ENCODE measurements at regions of chr6 and their contacts with region 1.

Region 1: GRCh38 chr6:2634139-2634964 is 116.4 kb downstream of the MYLK4 start:
- DNase-seq: peak; percentile 62 to 80 (median 72)
- H3K4me3 ChIP-seq: peak overlapping the region; percentile 26
- H3K4me3 Mint-ChIP-seq: peak overlapping the region; percentile 57 to 74 (median 66)
- H3K27ac ChIP-seq: no peak overlapping the region
- H3K27ac Mint-ChIP-seq: no peak overlapping the region
- H3K4me1 ChIP-seq: peaks cover 11% of the 10 kb centered on the region
- H3K4me1 Mint-ChIP-seq: peaks cover 0 to 9% (median 4%) of the 10 kb centered on the region in 3 donors
- H3K27me3 ChIP-seq: no peaks in the 10 kb centered on the region
- H3K27me3 Mint-ChIP-seq: peaks cover 12 to 32% of the 10 kb centered on the region in 2 donors

Region 2: GRCh38 chr6:1596088-1596852 is 1038.1 kb before region 1 on chr6:
- CTCF ChIA-PET with region 1: interaction called, 150 read pairs
- POLR2A ChIA-PET with region 1: no interaction called
- DNase-seq: peak; percentile 43 to 71 (median 59)
- H3K4me3 ChIP-seq: no peak overlapping the region
- H3K4me3 Mint-ChIP-seq: no peak overlapping the region
- H3K27ac ChIP-seq: no peak overlapping the region
- H3K27ac Mint-ChIP-seq: peak overlapping the region in 1 of 8 donors; percentile 7
- H3K4me1 ChIP-seq: peaks cover 7% of the 10 kb centered on the region
- H3K4me1 Mint-ChIP-seq: peaks cover 3 to 8% (median 7%) of the 10 kb centered on the region in 3 donors
- H3K27me3 ChIP-seq: peaks cover 47% of the 10 kb centered on the region
- H3K27me3 Mint-ChIP-seq: peaks cover 45 to 71% of the 10 kb centered on the region in 2 donors

Region 3: GRCh38 chr6:1604158-1605030 is 1030.0 kb before region 1 on chr6:
- CTCF ChIA-PET with region 1: interaction called, 150 read pairs
- POLR2A ChIA-PET with region 1: no interaction called
- DNase-seq: peak in 4 of 5 donors; percentile 45 to 68 (median 54)
- H3K4me3 ChIP-seq: no peak overlapping the region
- H3K4me3 Mint-ChIP-seq: no peak overlapping the region
- H3K27ac ChIP-seq: no peak overlapping the region
- H3K27ac Mint-ChIP-seq: no peak overlapping the region
- H3K4me1 ChIP-seq: peaks cover 34% of the 10 kb centered on the region
- H3K4me1 Mint-ChIP-seq: peaks cover 30 to 46% (median 31%) of the 10 kb centered on the region in 3 donors
- H3K27me3 ChIP-seq: peaks cover 74% of the 10 kb centered on the region
- H3K27me3 Mint-ChIP-seq: peaks cover 62 to 83% of the 10 kb centered on the region in 2 donors

Region 4: DNA sequence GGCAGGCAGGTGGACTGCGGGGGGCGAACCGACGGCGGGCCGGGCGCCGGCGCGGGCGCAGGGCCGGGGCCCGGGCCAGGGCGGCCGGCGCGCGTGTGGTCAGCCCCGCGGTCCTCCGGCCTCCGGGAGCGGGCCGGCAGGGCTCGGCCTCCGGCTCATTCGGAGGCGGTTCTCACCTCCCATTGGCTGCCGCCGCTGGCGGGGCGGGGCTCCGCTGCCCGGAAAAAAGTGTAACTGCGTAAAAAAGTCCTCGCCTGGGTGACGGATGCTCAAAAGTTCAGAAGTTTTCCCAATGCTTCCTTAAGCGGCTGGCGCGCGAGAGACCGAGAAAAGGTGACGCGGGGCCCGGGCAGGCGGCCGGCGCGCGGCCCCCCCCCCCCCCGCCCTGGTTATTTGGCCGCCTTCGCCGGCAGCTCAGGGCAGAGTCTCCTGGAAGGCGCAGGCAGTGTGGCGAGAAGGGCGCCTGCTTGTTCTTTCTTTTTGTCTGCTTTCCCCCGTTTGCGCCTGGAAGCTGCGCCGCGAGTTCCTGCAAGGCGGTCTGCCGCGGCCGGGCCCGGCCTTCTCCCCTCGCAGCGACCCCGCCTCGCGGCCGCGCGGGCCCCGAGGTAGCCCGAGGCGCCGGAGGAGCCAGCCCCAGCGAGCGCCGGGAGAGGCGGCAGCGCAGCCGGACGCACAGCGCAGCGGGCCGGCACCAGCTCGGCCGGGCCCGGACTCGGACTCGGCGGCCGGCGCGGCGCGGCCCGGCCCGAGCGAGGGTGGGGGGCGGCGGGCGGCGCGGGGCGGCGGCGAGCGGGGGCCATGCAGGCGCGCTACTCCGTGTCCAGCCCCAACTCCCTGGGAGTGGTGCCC is 1024.5 kb before region 1 on chr6 and contains the start of gene FOXC1:
- CTCF ChIA-PET with region 1: interaction called, 38 read pairs
- POLR2A ChIA-PET with region 1: no interaction called
- DNase-seq: no peak
- H3K4me3 ChIP-seq: no peak within 1 kb of the TSS
- H3K4me3 Mint-ChIP-seq: peak within 1 kb of the TSS; percentile 77 to 89 (median 82)
- H3K27ac ChIP-seq: no peak within 1 kb of the TSS
- H3K27ac Mint-ChIP-seq: peak within 1 kb of the TSS in 2 of 8 donors; percentile 40 to 74
- H3K4me1 ChIP-seq: peaks cover 38% of the 10 kb centered on the region
- H3K4me1 Mint-ChIP-seq: peaks cover 44 to 65% (median 55%) of the 10 kb centered on the region in 3 donors
- H3K27me3 ChIP-seq: peaks cover 58% of the 10 kb centered on the region
- H3K27me3 Mint-ChIP-seq: peaks cover 58 to 66% of the 10 kb centered on the region in 2 donors
- total RNA-seq, gene FOXC1: not detected

Region 5: GRCh38 chr6:2209226-2209809 is 425.0 kb before region 1 on chr6:
- CTCF ChIA-PET with region 1: interaction called, 11 read pairs
- POLR2A ChIA-PET with region 1: no interaction called
- DNase-seq: peak in 2 of 5 donors; percentile 8 to 52
- H3K4me3 ChIP-seq: no peak overlapping the region
- H3K4me3 Mint-ChIP-seq: no peak overlapping the region
- H3K27ac ChIP-seq: no peak overlapping the region
- H3K27ac Mint-ChIP-seq: peak overlapping the region in 2 of 8 donors; percentile 12 to 73
- H3K4me1 ChIP-seq: no peaks in the 10 kb centered on the region
- H3K4me1 Mint-ChIP-seq: peaks cover 1 to 6% (median 3%) of the 10 kb centered on the region in 3 donors
- H3K27me3 ChIP-seq: no peaks in the 10 kb centered on the region
- H3K27me3 Mint-ChIP-seq: no peaks in the 10 kb centered on the region

Region 6: DNA sequence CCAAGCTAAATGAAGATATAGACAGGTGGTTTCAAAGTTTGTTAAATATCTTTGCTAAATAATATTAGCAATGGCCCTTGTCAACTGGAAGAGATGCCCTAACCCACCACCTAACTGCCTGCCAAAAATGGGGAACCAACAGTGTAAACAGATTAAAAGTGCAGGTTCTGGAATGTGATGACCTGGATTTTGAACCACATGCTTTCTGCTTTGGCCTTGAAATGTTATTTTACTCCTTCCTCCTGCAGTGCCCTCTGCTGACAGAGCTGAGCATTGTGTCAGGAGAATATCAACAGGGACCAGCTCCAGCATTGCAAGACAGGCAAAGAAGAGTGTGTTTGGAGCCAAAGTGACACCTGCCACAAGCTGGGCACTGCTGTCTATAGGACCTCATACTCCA is 110.3 kb before region 1 on chr6:
- CTCF ChIA-PET with region 1: no interaction called
- POLR2A ChIA-PET with region 1: no interaction called
- DNase-seq: no peak
- H3K4me3 ChIP-seq: no peak overlapping the region
- H3K4me3 Mint-ChIP-seq: no peak overlapping the region
- H3K27ac ChIP-seq: no peak overlapping the region
- H3K27ac Mint-ChIP-seq: no peak overlapping the region
- H3K4me1 ChIP-seq: no peaks in the 10 kb centered on the region
- H3K4me1 Mint-ChIP-seq: peaks cover 4 to 10% (median 6%) of the 10 kb centered on the region in 3 donors
- H3K27me3 ChIP-seq: no peaks in the 10 kb centered on the region
- H3K27me3 Mint-ChIP-seq: peaks cover 15 to 38% of the 10 kb centered on the region in 2 donors

Region 7: GRCh38 chr6:2579241-2579761 is 55.1 kb before region 1 on chr6:
- CTCF ChIA-PET with region 1: no interaction called
- POLR2A ChIA-PET with region 1: no interaction called
- DNase-seq: no peak
- H3K4me3 ChIP-seq: no peak overlapping the region
- H3K4me3 Mint-ChIP-seq: no peak overlapping the region
- H3K27ac ChIP-seq: no peak overlapping the region
- H3K27ac Mint-ChIP-seq: no peak overlapping the region
- H3K4me1 ChIP-seq: no peaks in the 10 kb centered on the region
- H3K4me1 Mint-ChIP-seq: no peaks in the 10 kb centered on the region
- H3K27me3 ChIP-seq: no peaks in the 10 kb centered on the region
- H3K27me3 Mint-ChIP-seq: peaks cover 18 to 55% of the 10 kb centered on the region in 2 donors

Region 8: DNA sequence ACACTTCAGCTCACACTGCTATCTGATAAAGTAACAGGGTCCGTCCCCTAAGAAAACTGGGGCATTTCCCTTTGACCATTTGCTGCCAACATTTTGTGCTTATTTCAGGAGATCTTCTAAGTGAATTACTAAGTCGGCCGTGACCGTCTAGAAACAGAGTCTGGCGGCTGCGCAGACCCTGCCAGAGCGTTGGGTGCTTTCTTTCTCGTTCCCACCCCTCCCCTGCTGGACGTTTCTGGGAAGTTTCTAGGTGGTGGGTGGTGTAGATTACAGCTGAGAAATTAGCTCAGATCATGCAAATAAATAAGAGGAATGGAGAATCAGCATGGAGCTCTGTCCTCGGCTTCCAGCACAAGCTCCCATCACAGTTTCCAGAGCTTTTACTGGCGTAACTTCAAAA is 11.7 kb before region 1 on chr6:
- CTCF ChIA-PET with region 1: interaction called, 11 read pairs
- POLR2A ChIA-PET with region 1: no interaction called
- DNase-seq: no peak
- H3K4me3 ChIP-seq: no peak overlapping the region
- H3K4me3 Mint-ChIP-seq: no peak overlapping the region
- H3K27ac ChIP-seq: no peak overlapping the region
- H3K27ac Mint-ChIP-seq: no peak overlapping the region
- H3K4me1 ChIP-seq: no peaks in the 10 kb centered on the region
- H3K4me1 Mint-ChIP-seq: no peaks in the 10 kb centered on the region
- H3K27me3 ChIP-seq: no peaks in the 10 kb centered on the region
- H3K27me3 Mint-ChIP-seq: peaks cover 3 to 37% of the 10 kb centered on the region in 2 donors

Region 9: DNA sequence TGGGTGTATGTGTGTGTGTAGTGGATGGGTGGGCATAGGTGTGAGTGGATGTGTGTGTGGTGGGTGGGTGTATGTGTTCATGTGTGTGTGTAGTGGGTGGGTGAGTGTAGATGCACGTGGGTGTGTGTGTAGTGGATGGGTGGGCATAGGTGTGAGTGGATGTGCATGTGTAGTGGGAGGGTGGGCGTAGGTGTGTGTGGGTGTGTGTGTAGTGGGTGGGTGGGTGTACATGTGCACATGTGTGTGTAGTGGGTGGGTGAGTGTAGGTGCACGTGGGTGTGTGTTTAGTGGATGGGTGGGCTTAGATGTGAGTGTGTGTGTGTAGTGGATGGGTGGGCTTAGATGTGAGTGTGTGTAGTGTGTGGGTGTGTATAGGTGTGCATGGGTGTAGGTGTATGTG is 12.0 kb after region 1 on chr6:
- CTCF ChIA-PET with region 1: interaction called, 39 read pairs
- POLR2A ChIA-PET with region 1: no interaction called
- DNase-seq: no peak
- H3K4me3 ChIP-seq: no peak overlapping the region
- H3K4me3 Mint-ChIP-seq: no peak overlapping the region
- H3K27ac ChIP-seq: no peak overlapping the region
- H3K27ac Mint-ChIP-seq: no peak overlapping the region
- H3K4me1 ChIP-seq: no peaks in the 10 kb centered on the region
- H3K4me1 Mint-ChIP-seq: no peaks in the 10 kb centered on the region
- H3K27me3 ChIP-seq: peaks cover 18% of the 10 kb centered on the region
- H3K27me3 Mint-ChIP-seq: peaks cover 36 to 78% of the 10 kb centered on the region in 2 donors